HCT116 (cell line): ENCODE measurements at regions of chr6 and their contacts with region 1.

Region 1: GRCh38 chr6:25717866-25718740 is 36.4 kb upstream of the SLC17A4 start:
- DNase-seq: peak; percentile 6
- ATAC-seq: peak; percentile 48; the same call in 1 of the 2 replicates
- H3K4me3 ChIP-seq: no peak overlapping the region
- H3K27ac ChIP-seq: no peak overlapping the region
- H3K4me1 ChIP-seq: 0 out of 4 replicates have a peak, but pooled peaks cover 0 to 5% of the 10 kb centered on the region in 2 experiments
- H3K27me3 ChIP-seq: no peaks in the 10 kb centered on the region
- CTCF ChIP-seq: peak; percentile 47 to 67 (median 53); a peak in 5 of 6 replicates
- POLR2A ChIP-seq: no peak
- RAD21 ChIP-seq: peak; percentile 64

Region 2: GRCh38 chr6:25223490-25223991 is 494.6 kb before region 1 on chr6:
- CTCF ChIA-PET with region 1: interaction called, 40 read pairs
- POLR2A ChIA-PET with region 1: no interaction called
- RAD21 ChIA-PET with region 1: interaction called, 4 to 7 read pairs
- intact Hi-C with region 1: loop called (anchors 2 kb)
- DNase-seq: peak; percentile 61
- ATAC-seq: peak; percentile 80
- H3K4me3 ChIP-seq: peak overlapping the region; percentile 18 to 23; a peak in 3 of 4 replicates
- H3K27ac ChIP-seq: no peak overlapping the region
- H3K4me1 ChIP-seq: no peaks in the 10 kb centered on the region; a peak in 1 of 4 replicates
- H3K27me3 ChIP-seq: no peaks in the 10 kb centered on the region
- CTCF ChIP-seq: peak; percentile 76 to 95 (median 89)
- POLR2A ChIP-seq: no peak
- RAD21 ChIP-seq: peak; percentile 93

Region 3: GRCh38 chr6:25732468-25733198 is 14.5 kb after region 1 on chr6:
- CTCF ChIA-PET with region 1: interaction called, 12 read pairs
- POLR2A ChIA-PET with region 1: no interaction called
- RAD21 ChIA-PET with region 1: no interaction called
- intact Hi-C with region 1: no loop called
- DNase-seq: no peak
- ATAC-seq: no peak
- H3K4me3 ChIP-seq: no peak overlapping the region
- H3K27ac ChIP-seq: no peak overlapping the region
- H3K4me1 ChIP-seq: no peaks in the 10 kb centered on the region
- H3K27me3 ChIP-seq: no peaks in the 10 kb centered on the region
- CTCF ChIP-seq: no peak
- POLR2A ChIP-seq: no peak
- RAD21 ChIP-seq: no peak

Region 4: DNA sequence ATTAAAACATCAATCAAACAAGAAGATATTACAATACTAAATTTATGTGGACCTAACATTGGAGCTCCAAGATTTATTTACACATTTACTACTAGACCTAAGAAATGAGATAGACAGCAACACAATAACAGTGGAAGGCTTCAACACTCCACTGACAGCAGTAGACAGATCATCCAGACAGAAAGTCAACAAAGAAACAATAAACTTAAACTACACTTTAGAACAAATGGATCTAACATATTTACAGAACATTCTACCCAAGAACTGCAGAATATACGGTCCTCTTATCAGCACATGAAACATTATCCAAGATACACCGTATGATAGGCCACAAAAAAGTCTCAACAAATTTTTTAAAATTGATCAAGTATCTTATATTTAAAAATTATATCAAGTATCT is 86.7 kb after region 1 on chr6:
- CTCF ChIA-PET with region 1: no interaction called
- POLR2A ChIA-PET with region 1: no interaction called
- RAD21 ChIA-PET with region 1: no interaction called
- intact Hi-C with region 1: no loop called
- DNase-seq: no peak
- ATAC-seq: no peak
- H3K4me3 ChIP-seq: no peak overlapping the region
- H3K27ac ChIP-seq: no peak overlapping the region
- H3K4me1 ChIP-seq: no peaks in the 10 kb centered on the region
- H3K27me3 ChIP-seq: no peaks in the 10 kb centered on the region
- CTCF ChIP-seq: no peak
- POLR2A ChIP-seq: no peak
- RAD21 ChIP-seq: no peak

Region 5: GRCh38 chr6:25889877-25890853 is 172.1 kb after region 1 on chr6:
- CTCF ChIA-PET with region 1: no interaction called
- POLR2A ChIA-PET with region 1: no interaction called
- RAD21 ChIA-PET with region 1: no interaction called
- intact Hi-C with region 1: loop called (anchors 2 kb)
- DNase-seq: peak; percentile 27
- ATAC-seq: peak; percentile 91
- H3K4me3 ChIP-seq: no peak overlapping the region
- H3K27ac ChIP-seq: no peak overlapping the region
- H3K4me1 ChIP-seq: no peaks in the 10 kb centered on the region
- H3K27me3 ChIP-seq: no peaks in the 10 kb centered on the region
- CTCF ChIP-seq: peak; percentile 31 to 67 (median 59); a peak in 5 of 6 replicates
- POLR2A ChIP-seq: no peak
- RAD21 ChIP-seq: peak; percentile 86

Region 6: GRCh38 chr6:25992413-25993037 is 274.4 kb after region 1 on chr6:
- CTCF ChIA-PET with region 1: no interaction called
- POLR2A ChIA-PET with region 1: no interaction called
- RAD21 ChIA-PET with region 1: no interaction called
- intact Hi-C with region 1: loop called (anchors 10 kb)
- DNase-seq: peak; percentile 78
- ATAC-seq: peak; percentile 92
- H3K4me3 ChIP-seq: peak overlapping the region; percentile 64 to 65
- H3K27ac ChIP-seq: peak overlapping the region; percentile 55
- H3K4me1 ChIP-seq: peaks cover 6 to 15% of the 10 kb centered on the region in 2 experiments; a peak in 3 of 4 replicates
- H3K27me3 ChIP-seq: no peaks in the 10 kb centered on the region
- CTCF ChIP-seq: peak; percentile 98 to 99 (median 99)
- POLR2A ChIP-seq: peak; percentile 61
- RAD21 ChIP-seq: peak; percentile 73